ENCODE measurements at regions of chr17 and their contacts with region 1.

Region 1: GRCh38 chr17:1455797-1456599 is at the start of gene CRK:
- DNase-seq: peak; percentile 97
- H3K4me3 Mint-ChIP-seq: peak within 1 kb of the TSS; percentile 88
- H3K27ac Mint-ChIP-seq: peak within 1 kb of the TSS; percentile 84
- H3K4me1 Mint-ChIP-seq: peaks cover 20% of the 10 kb centered on the region
- H3K27me3 Mint-ChIP-seq: peaks cover 12% of the 10 kb centered on the region
- total RNA-seq, gene CRK: 22.2 and 22.6 TPM in 2 replicates

Region 2: DNA sequence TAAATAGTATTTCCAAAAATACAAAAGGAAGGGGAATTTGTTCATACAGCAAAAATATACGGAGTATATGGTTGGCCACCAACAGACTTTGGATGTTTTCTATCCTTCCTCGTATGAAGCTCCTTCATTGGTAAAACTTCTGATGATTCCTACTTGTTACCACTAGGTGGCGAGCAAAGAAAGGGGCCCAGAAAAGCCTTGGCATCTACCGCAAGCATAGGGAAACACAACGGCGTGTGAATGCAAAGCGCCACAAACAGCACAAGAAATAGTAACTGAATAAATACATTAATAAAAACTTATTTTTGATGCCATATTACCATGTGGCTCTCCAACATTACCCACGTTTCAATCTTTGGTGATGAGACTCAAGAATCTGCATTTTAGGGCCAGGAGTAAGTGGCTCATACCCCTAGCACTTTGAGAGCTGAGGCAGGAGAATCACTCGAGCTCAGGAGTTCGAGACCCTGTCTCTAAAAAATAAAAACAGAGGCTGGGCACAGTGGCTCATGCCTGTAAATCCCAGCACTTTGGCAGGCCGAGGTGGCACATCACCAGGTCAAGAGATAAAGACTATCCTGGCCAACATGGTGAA is 90.5 kb before region 1 on chr17:
- intact Hi-C with region 1: loop called (anchors 5 kb)
- DNase-seq: peak; percentile 47
- H3K4me3 Mint-ChIP-seq: no peak overlapping the region
- H3K27ac Mint-ChIP-seq: peak overlapping the region; percentile 7
- H3K4me1 Mint-ChIP-seq: peaks cover 38% of the 10 kb centered on the region
- H3K27me3 Mint-ChIP-seq: no peaks in the 10 kb centered on the region

Region 3: GRCh38 chr17:1399679-1400512 is 56.1 kb before region 1 on chr17 and contains the start of gene YWHAE:
- intact Hi-C with region 1: loop called (anchors 1 kb)
- DNase-seq: peak; percentile 95
- H3K4me3 Mint-ChIP-seq: peak within 1 kb of the TSS; percentile 98
- H3K27ac Mint-ChIP-seq: peak within 1 kb of the TSS; percentile 100
- H3K4me1 Mint-ChIP-seq: peaks cover 19% of the 10 kb centered on the region
- H3K27me3 Mint-ChIP-seq: peaks cover 2% of the 10 kb centered on the region
- total RNA-seq, gene YWHAE: 499 and 501 TPM in 2 replicates

Region 4: GRCh38 chr17:1488030-1488863 is 32.2 kb after region 1 on chr17:
- intact Hi-C with region 1: loop called (anchors 2 kb)
- DNase-seq: peak; percentile 54
- H3K4me3 Mint-ChIP-seq: peak overlapping the region; percentile 84
- H3K27ac Mint-ChIP-seq: no peak overlapping the region
- H3K4me1 Mint-ChIP-seq: peaks cover 23% of the 10 kb centered on the region
- H3K27me3 Mint-ChIP-seq: no peaks in the 10 kb centered on the region